ENCODE measurements at regions of chr5 and their contacts with region 1.

Region 1: GRCh38 chr5:141691867-141692532 is 10.0 kb upstream of the ARAP3 start:
- DNase-seq: peak; percentile 97
- H3K4me3 ChIP-seq: peak overlapping the region in 7 of 8 donors; percentile 11 to 59 (median 34)
- H3K27ac ChIP-seq: peak overlapping the region in 1 of 8 donors; percentile 8
- H3K4me1 ChIP-seq: peaks cover 3 to 21% (median 12%) of the 10 kb centered on the region in 6 donors
- H3K27me3 ChIP-seq: peaks cover 0 to 27% (median 0%) of the 10 kb centered on the region in 7 donors
- CTCF ChIP-seq: peak; percentile 96 to 100 (median 99)
- POLR2A ChIP-seq: no peak

Region 2: GRCh38 chr5:141529002-141529401 is 163.0 kb before region 1 on chr5:
- intact Hi-C with region 1: no loop called
- DNase-seq: no peak
- H3K4me3 ChIP-seq: no peak overlapping the region
- H3K27ac ChIP-seq: peak overlapping the region in 5 of 8 donors; percentile 0 to 45 (median 29)
- H3K4me1 ChIP-seq: peaks cover 7 to 48% (median 27%) of the 10 kb centered on the region in 6 donors
- H3K27me3 ChIP-seq: no peaks in the 10 kb centered on the region
- CTCF ChIP-seq: no peak
- POLR2A ChIP-seq: no peak

Region 3: DNA sequence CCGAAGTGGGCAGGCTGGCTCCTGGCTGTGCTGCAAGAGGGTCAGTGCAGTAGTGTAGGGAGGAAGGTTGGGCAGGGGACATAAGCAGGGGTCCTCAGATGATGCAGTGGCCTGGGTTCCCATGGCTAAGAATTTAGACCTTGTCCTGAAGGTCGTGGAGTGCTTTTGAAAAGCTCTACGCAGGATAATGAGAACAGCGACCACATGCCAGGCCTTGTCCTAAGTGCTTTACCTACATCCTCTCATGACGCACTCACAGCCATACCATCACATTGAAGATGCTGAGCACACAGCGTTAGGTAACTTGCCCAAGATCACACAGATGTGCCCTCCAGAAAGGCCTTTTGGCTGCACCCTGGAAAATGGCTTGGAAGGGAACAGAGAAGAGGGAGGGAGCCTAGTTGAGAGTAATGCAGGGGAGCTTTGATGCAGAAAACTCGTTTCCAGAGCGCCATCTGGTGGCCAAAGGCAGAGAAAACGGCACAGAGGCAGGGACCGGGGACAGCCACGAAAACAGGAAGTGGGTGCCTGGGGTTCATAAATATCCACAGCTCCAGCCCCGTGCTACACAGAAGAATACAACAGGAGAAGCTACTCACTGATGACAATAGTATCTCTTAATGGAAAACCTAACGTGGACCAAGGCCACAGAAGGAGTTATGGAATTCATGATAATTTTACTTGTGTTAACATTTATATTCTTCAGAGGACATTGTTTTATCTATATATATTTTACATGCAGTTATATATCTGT is 268.6 kb after region 1 on chr5:
- intact Hi-C with region 1: loop called (anchors 5 kb)
- DNase-seq: peak; percentile 96
- H3K4me3 ChIP-seq: peak overlapping the region in 1 of 8 donors; percentile 21
- H3K27ac ChIP-seq: peak overlapping the region in 7 of 8 donors; percentile 9 to 81 (median 61)
- H3K4me1 ChIP-seq: peaks cover 31 to 64% (median 43%) of the 10 kb centered on the region in 6 donors
- H3K27me3 ChIP-seq: no peaks in the 10 kb centered on the region
- CTCF ChIP-seq: peak; percentile 91 to 99 (median 97)
- POLR2A ChIP-seq: no peak

Region 4: DNA sequence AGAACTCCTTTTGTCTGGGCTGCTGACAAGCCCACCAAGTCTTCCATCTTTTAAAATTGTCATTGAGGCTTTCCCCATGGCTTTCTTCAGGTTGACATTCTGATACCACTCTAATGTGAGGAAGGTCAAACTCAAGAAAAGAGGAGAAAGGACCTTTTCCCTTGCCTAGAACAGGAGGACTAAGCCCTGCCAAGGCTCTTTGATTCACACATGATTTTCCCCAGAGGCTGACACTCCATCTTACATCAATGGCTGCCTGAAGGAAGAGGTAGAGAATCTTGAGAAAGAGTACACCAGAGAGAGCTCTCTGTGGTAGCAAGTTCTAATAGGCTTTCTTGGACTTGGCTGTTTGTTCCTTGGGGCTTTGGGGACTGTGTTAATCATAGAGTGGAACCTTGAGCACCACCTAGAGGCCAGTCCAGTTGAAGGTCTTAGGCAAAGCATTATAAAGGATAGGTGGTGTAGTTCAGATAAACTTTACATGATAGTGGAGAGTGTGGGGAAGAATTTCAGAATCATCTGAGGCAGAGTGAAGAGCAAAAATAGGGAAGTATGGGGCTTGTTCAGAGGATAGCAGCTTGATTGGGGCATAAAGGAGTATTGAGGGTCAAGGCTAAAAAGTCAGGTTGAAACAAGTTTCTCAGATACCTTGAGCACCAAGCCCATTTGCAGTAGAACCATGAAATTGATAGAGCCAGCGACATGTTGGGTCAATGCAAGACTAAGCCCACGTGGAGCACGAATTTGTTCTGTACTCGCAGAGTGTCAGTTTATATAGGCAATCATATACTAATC is 453.3 kb after region 1 on chr5:
- intact Hi-C with region 1: loop called (anchors 10 kb)
- DNase-seq: no peak
- H3K4me3 ChIP-seq: no peak overlapping the region
- H3K27ac ChIP-seq: no peak overlapping the region
- H3K4me1 ChIP-seq: peaks cover 0 to 10% (median 0%) of the 10 kb centered on the region in 6 donors
- H3K27me3 ChIP-seq: no peaks in the 10 kb centered on the region
- CTCF ChIP-seq: peak in 10 of 11 experiments; percentile 29 to 74 (median 58)
- POLR2A ChIP-seq: no peak